CD4-positive, alpha-beta T cell (primary cell): ENCODE measurements at regions of chr18 and their contacts with region 1.

Region 1: GRCh38 chr18:21191596-21192307 is 50.3 kb upstream of the GREB1L start:
- DNase-seq: peak in 3 of 14 experiments; percentile 8 to 17 (median 11)
- ATAC-seq: no peak
- H3K4me3 ChIP-seq: no peak overlapping the region
- H3K4me3 Mint-ChIP-seq: no peak overlapping the region
- H3K27ac ChIP-seq: no peak overlapping the region
- H3K27ac Mint-ChIP-seq: no peak overlapping the region
- H3K4me1 ChIP-seq: no peaks in the 10 kb centered on the region
- H3K4me1 Mint-ChIP-seq: no peaks in the 10 kb centered on the region
- H3K27me3 ChIP-seq: peaks cover 0 to 7% of the 10 kb centered on the region in 2 experiments
- H3K27me3 Mint-ChIP-seq: peaks cover 31% of the 10 kb centered on the region
- CTCF ChIP-seq: peak; percentile 20

Region 2: DNA sequence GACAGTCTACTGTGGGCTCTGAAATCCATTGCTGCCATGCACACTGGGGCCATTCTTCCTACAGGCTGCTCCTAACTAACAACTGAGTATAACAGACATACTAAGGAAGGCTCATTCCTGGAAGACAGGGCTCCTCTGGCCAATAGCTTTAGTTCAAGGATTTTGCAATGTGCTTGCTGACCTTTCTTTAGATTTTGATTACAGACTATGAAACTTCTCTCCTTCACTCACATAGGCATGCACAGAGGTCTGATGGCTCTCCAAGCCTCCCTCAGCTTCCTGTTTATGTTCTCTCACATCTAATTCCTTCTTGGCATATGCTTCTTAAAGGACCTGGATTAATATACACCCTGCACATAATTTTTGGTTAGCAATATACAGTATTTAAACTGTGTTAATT is 45.7 kb before region 1 on chr18:
- CTCF ChIA-PET with region 1: no interaction called
- POLR2A ChIA-PET with region 1: no interaction called
- intact Hi-C with region 1: no loop called
- DNase-seq: no peak
- ATAC-seq: no peak
- H3K4me3 ChIP-seq: no peak overlapping the region
- H3K4me3 Mint-ChIP-seq: no peak overlapping the region
- H3K27ac ChIP-seq: no peak overlapping the region
- H3K27ac Mint-ChIP-seq: no peak overlapping the region
- H3K4me1 ChIP-seq: no peaks in the 10 kb centered on the region
- H3K4me1 Mint-ChIP-seq: no peaks in the 10 kb centered on the region
- H3K27me3 ChIP-seq: no peaks in the 10 kb centered on the region
- H3K27me3 Mint-ChIP-seq: no peaks in the 10 kb centered on the region
- CTCF ChIP-seq: no peak

Region 3: GRCh38 chr18:21257386-21257785 is 65.6 kb after region 1 on chr18:
- CTCF ChIA-PET with region 1: no interaction called
- POLR2A ChIA-PET with region 1: no interaction called
- intact Hi-C with region 1: no loop called
- DNase-seq: no peak
- ATAC-seq: no peak
- H3K4me3 ChIP-seq: no peak overlapping the region
- H3K4me3 Mint-ChIP-seq: no peak overlapping the region
- H3K27ac ChIP-seq: no peak overlapping the region
- H3K27ac Mint-ChIP-seq: no peak overlapping the region
- H3K4me1 ChIP-seq: no peaks in the 10 kb centered on the region
- H3K4me1 Mint-ChIP-seq: no peaks in the 10 kb centered on the region
- H3K27me3 ChIP-seq: peaks cover 0 to 5% of the 10 kb centered on the region in 2 experiments
- H3K27me3 Mint-ChIP-seq: peaks cover 10% of the 10 kb centered on the region
- CTCF ChIP-seq: no peak

Region 4: DNA sequence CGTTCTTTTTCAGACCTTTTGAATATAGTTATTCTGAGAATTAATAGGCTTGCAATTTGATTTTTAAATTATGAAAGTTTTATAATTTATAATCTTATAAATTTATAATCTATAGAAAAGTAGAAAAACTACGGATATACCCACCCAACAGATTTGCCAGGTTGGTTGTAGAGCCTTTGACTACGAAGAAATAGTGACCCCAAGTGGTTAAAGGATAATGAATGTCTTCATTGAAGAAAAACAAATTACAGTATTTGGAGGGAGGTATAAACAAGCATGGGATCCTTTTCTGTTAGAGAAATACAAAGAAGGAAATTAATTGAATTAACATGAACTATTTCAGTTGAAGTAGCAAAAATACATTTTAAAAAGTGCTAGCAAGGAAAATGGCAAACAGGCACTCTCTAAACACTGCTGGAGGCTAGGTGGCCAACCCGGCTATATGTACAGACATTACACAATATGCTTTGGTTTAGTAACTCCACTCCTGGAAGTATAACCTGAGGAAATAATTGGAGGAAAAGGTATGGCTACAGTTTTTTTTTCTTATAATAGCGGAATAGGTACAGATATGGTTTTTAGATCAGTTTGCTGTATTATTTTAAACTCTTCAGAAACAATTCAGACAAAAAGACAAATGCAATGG is 659.7 kb after region 1 on chr18:
- CTCF ChIA-PET with region 1: no interaction called
- POLR2A ChIA-PET with region 1: no interaction called
- intact Hi-C with region 1: loop called in 1 of 2 experiments (anchors 5 kb)
- DNase-seq: peak in 2 of 14 experiments; percentile 18 to 24
- ATAC-seq: no peak
- H3K4me3 ChIP-seq: no peak overlapping the region
- H3K4me3 Mint-ChIP-seq: no peak overlapping the region
- H3K27ac ChIP-seq: no peak overlapping the region
- H3K27ac Mint-ChIP-seq: no peak overlapping the region
- H3K4me1 ChIP-seq: no peaks in the 10 kb centered on the region
- H3K4me1 Mint-ChIP-seq: peaks cover 5% of the 10 kb centered on the region
- H3K27me3 ChIP-seq: no peaks in the 10 kb centered on the region
- H3K27me3 Mint-ChIP-seq: no peaks in the 10 kb centered on the region
- CTCF ChIP-seq: peak; percentile 41

Region 5: GRCh38 chr18:21955757-21956652 is 764.3 kb after region 1 on chr18:
- CTCF ChIA-PET with region 1: interaction called, 5 read pairs
- POLR2A ChIA-PET with region 1: no interaction called
- intact Hi-C with region 1: loop called (anchors 1 kb)
- DNase-seq: peak; percentile 60 to 85 (median 75)
- ATAC-seq: peak; percentile 83
- H3K4me3 ChIP-seq: no peak overlapping the region
- H3K4me3 Mint-ChIP-seq: no peak overlapping the region
- H3K27ac ChIP-seq: no peak overlapping the region
- H3K27ac Mint-ChIP-seq: no peak overlapping the region
- H3K4me1 ChIP-seq: no peaks in the 10 kb centered on the region
- H3K4me1 Mint-ChIP-seq: no peaks in the 10 kb centered on the region
- H3K27me3 ChIP-seq: no peaks in the 10 kb centered on the region
- H3K27me3 Mint-ChIP-seq: peaks cover 30% of the 10 kb centered on the region
- CTCF ChIP-seq: peak; percentile 94

Region 6: DNA sequence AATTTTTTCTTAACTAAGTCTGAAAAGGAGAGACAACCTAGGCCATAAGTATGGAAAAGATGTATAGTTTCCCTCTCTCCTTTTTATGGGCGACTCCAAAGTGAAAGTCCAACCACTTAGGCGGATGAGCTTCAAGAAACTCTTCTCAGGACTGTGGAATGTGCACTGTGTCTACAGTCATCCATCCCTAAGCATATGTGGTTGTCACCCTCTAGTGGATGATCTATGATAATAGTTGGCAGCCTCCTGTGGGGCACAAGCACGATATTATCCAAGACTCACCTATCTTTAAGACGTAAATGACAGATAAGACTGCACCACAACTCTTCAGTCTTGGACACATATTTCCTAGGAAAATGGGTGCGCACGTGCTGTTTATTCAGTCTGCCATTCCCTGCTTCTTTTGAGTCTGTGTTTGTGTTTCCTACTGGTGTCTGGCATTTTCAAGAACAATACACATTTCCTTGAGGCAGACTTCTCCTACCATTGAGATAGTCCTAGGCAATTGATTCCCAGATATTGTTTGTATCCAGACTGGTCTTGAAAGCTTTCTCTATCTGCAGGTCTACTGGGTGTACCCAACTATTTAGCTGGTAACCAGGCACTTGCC is 1371.5 kb after region 1 on chr18:
- CTCF ChIA-PET with region 1: no interaction called
- POLR2A ChIA-PET with region 1: no interaction called
- intact Hi-C with region 1: loop called in 1 of 2 experiments (anchors 10 kb)
- DNase-seq: peak in 3 of 14 experiments; percentile 48 to 56 (median 48)
- ATAC-seq: no peak
- H3K4me3 ChIP-seq: no peak overlapping the region
- H3K4me3 Mint-ChIP-seq: no peak overlapping the region
- H3K27ac ChIP-seq: no peak overlapping the region
- H3K27ac Mint-ChIP-seq: no peak overlapping the region
- H3K4me1 ChIP-seq: peaks cover 2% of the 10 kb centered on the region
- H3K4me1 Mint-ChIP-seq: peaks cover 4% of the 10 kb centered on the region
- H3K27me3 ChIP-seq: peaks cover 13 to 37% of the 10 kb centered on the region in 2 experiments
- H3K27me3 Mint-ChIP-seq: peaks cover 51% of the 10 kb centered on the region
- CTCF ChIP-seq: no peak

Region 7: GRCh38 chr18:22703883-22704585 is 1512.3 kb after region 1 on chr18:
- CTCF ChIA-PET with region 1: no interaction called
- POLR2A ChIA-PET with region 1: no interaction called
- intact Hi-C with region 1: loop called in 1 of 2 experiments (anchors 5 kb)
- DNase-seq: peak in 3 of 14 experiments; percentile 34 to 41 (median 36)
- ATAC-seq: no peak
- H3K4me3 ChIP-seq: no peak overlapping the region
- H3K4me3 Mint-ChIP-seq: no peak overlapping the region
- H3K27ac ChIP-seq: no peak overlapping the region
- H3K27ac Mint-ChIP-seq: no peak overlapping the region
- H3K4me1 ChIP-seq: no peaks in the 10 kb centered on the region
- H3K4me1 Mint-ChIP-seq: no peaks in the 10 kb centered on the region
- H3K27me3 ChIP-seq: peaks cover 0 to 5% of the 10 kb centered on the region in 2 experiments
- H3K27me3 Mint-ChIP-seq: peaks cover 22% of the 10 kb centered on the region
- CTCF ChIP-seq: peak; percentile 49